Naive thymus-derived CD4-positive, alpha-beta T cell (primary cell): ENCODE measurements at regions of chr1 and their contacts with region 1.

Region 1: DNA sequence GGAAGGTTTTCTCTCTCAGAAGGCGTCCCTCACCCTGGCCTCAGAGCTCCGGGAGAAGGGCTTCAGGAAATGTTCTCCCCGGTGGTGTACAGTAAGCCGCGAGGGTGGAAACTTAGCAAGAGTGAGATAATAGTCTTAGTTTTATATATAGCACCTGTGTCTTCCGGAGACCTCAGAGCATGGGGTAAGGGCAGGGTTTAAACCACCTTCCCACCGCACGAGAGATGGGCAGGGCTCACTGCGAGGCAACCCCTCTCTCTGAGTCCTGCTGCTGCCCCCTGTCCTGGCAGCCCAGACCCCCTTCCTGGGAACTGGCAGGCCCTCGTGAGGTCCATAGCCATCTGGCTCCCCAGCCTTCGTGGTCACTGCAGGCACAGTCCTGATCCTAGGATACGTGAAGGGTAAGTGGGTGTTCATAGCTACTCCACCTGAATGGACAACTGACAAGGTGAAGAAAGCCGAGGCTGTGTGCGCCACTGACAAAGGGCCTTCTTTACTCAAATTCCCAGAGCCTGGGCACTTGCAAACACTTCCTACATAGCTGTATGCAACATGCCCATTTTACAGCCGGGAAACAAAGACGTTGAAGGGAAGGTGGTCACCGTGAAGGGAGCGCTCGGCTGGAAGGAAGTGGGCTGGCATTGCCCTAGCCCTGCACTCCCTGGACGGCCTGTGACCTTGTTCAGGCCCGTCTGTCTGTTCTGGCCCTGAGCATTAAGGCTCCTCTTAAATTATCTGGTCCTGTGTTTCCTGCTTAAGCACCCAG is 26.9 kb downstream of the ITPKB start:
- DNase-seq: peak in 7 of 9 donors; percentile 52 to 76 (median 61)
- ATAC-seq: peak; percentile 69
- H3K4me3 ChIP-seq: peak overlapping the region; percentile 43
- H3K4me3 Mint-ChIP-seq: peak overlapping the region; percentile 68 to 92 (median 82)
- H3K27ac ChIP-seq: peak overlapping the region; percentile 75
- H3K27ac Mint-ChIP-seq: peak overlapping the region; percentile 79 to 100 (median 95)
- H3K4me1 ChIP-seq: peaks cover 69 to 88% of the 10 kb centered on the region in 2 donors
- H3K4me1 Mint-ChIP-seq: peaks cover 72 to 100% (median 99%) of the 10 kb centered on the region in 7 donors
- H3K27me3 ChIP-seq: no peaks in the 10 kb centered on the region
- H3K27me3 Mint-ChIP-seq: no peaks in the 10 kb centered on the region

Region 2: GRCh38 chr1:226723657-226724532 is 11.7 kb after region 1 on chr1:
- CTCF ChIA-PET with region 1: interaction called, 5 read pairs
- POLR2A ChIA-PET with region 1: interaction called, 4 read pairs
- intact Hi-C with region 1: loop called in 1 of 2 experiments (anchors 1 kb)
- DNase-seq: peak in 5 of 9 donors; percentile 12 to 43 (median 25)
- ATAC-seq: peak; percentile 26
- H3K4me3 ChIP-seq: peak overlapping the region; percentile 51
- H3K4me3 Mint-ChIP-seq: peak overlapping the region; percentile 83 to 99 (median 92)
- H3K27ac ChIP-seq: peak overlapping the region; percentile 92
- H3K27ac Mint-ChIP-seq: peak overlapping the region; percentile 88 to 98 (median 94)
- H3K4me1 ChIP-seq: peaks cover 74 to 90% of the 10 kb centered on the region in 2 donors
- H3K4me1 Mint-ChIP-seq: peaks cover 77 to 99% (median 91%) of the 10 kb centered on the region in 7 donors
- H3K27me3 ChIP-seq: no peaks in the 10 kb centered on the region
- H3K27me3 Mint-ChIP-seq: no peaks in the 10 kb centered on the region

Region 3: DNA sequence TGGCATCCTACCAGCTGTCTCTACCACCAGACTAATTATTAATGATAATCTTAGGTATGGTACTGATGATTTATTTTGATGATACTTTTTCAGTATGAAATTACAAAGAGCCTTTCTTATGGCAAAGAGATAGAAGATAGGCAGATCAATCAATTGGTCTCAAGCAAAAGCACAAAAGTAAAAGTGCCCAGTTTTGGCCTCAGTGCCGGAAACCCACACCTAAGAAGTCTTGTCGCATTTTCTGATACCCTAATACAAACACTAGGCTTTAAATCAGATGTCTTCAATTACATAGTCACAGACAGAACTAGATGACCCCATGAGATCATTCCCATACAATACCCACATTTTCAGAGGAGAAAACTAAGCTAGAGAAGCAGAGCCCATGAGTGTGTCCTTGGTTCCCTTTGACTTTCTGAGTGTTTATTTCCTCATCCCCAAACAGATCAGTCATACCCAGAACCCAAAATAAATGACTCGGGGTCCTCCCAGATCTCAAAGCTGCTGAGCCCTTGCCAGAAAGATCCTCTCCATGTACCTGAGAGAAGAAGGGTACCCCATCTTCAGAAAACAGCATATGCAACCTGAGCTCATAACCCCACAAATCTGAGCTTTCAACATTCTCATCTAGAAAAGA is 19.2 kb after region 1 on chr1:
- CTCF ChIA-PET with region 1: interaction called, 10 read pairs
- POLR2A ChIA-PET with region 1: no interaction called
- intact Hi-C with region 1: loop called (anchors 1 kb)
- DNase-seq: peak in 1 of 9 donors; percentile 20
- ATAC-seq: no peak
- H3K4me3 ChIP-seq: peak overlapping the region; percentile 99
- H3K4me3 Mint-ChIP-seq: peak overlapping the region; percentile 86 to 99 (median 92)
- H3K27ac ChIP-seq: peak overlapping the region; percentile 92
- H3K27ac Mint-ChIP-seq: peak overlapping the region; percentile 88 to 97 (median 94)
- H3K4me1 ChIP-seq: peaks cover 39 to 61% of the 10 kb centered on the region in 2 donors
- H3K4me1 Mint-ChIP-seq: peaks cover 54 to 94% (median 67%) of the 10 kb centered on the region in 7 donors
- H3K27me3 ChIP-seq: no peaks in the 10 kb centered on the region
- H3K27me3 Mint-ChIP-seq: no peaks in the 10 kb centered on the region